ENCODE measurements at regions of chr4 and their contacts with region 1.

Region 1: GRCh38 chr4:98446499-98447375 is 185.6 kb downstream of the RAP1GDS1 start:
- DNase-seq: no peak

Region 2: DNA sequence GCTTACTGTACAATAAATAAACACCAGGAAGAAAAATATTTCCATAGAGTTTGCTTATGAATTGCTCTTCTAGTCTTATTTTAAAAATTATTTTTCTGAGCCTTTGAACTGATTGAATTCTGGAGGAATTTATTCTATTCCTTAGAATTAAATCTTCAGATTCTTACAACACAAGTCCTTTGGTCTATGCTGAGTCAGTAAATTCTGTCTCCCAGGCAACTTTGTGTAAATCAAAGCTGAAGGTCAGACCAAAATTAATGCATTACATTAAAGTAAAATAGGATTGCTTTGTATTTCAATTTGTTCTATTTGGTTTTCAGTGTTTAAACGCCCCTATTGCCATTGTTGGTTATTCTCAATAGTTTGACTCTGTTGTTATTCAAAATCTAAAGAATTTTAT is 276.7 kb before region 1 on chr4:
- intact Hi-C with region 1: loop called (anchors 10 kb)
- DNase-seq: no peak